Activated CD4-positive, alpha-beta T cell treated with anti-CD3 and anti-CD28 coated beads for 36 hours (primary cell): ENCODE measurements at regions of chr10 and their contacts with region 1.

Region 1: GRCh38 chr10:121927841-121928527 is at the start of gene ATE1:
- DNase-seq: peak; percentile 89
- ATAC-seq: peak; percentile 94
- H3K4me3 Mint-ChIP-seq: peak within 1 kb of the TSS; percentile 88
- H3K27ac Mint-ChIP-seq: peak within 1 kb of the TSS; percentile 96
- H3K4me1 Mint-ChIP-seq: peaks cover 20% of the 10 kb centered on the region
- H3K27me3 Mint-ChIP-seq: no peaks in the 10 kb centered on the region
- total RNA-seq, gene ATE1: 23.2 to 23.9 TPM

Region 2: DNA sequence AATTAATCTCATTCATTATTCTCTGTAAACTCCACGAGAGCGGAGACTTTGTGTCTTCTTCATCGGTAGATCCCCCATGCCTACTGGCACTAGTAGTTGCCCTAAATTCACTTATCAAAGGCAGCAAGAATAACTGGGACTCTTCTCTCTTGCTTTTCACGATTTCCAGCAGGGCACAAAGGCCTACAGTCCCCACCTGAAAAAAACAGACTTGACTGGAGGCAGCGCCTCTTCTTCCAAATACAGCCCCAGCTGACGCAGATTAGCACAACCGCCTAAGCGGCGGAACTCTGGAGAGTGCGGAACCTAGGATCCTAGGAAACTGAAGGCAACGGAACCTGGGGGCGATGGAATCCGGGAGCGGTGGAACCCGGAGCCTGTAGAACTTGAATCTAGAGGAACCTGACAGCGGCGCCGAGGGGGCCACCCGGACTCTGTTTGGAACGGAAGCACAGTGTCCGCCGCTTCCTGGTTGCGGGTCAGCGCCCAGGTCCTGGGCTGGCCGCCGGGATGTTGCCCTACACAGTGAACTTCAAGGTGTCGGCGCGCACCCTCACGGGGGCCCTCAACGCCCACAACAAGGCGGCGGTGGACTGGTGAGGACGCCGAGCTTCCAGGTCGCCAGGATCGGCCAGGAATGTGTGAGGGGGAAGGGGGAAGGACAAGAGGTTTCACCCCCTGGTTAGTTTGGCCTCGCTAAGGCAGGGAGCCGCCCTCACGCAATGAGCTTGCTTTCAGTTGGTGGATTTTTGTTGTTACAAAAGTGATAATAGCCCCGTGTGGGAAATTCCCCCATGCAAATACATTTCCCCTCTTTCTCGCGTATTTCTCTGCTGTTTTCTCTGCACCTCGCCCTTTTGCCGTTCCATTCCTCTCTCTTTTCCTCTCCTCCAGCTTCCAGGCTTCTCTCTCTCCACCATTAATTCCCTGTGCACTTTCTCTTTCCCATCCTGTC is 1076.8 kb before region 1 on chr10 and contains the start of gene WDR11:
- CTCF ChIA-PET with region 1: no interaction called
- POLR2A ChIA-PET with region 1: no interaction called
- intact Hi-C with region 1: loop called in 1 of 2 experiments (anchors 5 kb)
- DNase-seq: peak; percentile 83
- ATAC-seq: peak; percentile 93
- H3K4me3 Mint-ChIP-seq: peak within 1 kb of the TSS; percentile 88
- H3K27ac Mint-ChIP-seq: peak within 1 kb of the TSS; percentile 86
- H3K4me1 Mint-ChIP-seq: peaks cover 38% of the 10 kb centered on the region
- H3K27me3 Mint-ChIP-seq: no peaks in the 10 kb centered on the region
- total RNA-seq, gene WDR11: 39.6 to 65.1 TPM

Region 3: GRCh38 chr10:121497513-121498470 is 430.2 kb before region 1 on chr10:
- CTCF ChIA-PET with region 1: no interaction called
- POLR2A ChIA-PET with region 1: no interaction called
- intact Hi-C with region 1: no loop called
- DNase-seq: no peak
- ATAC-seq: no peak
- H3K4me3 Mint-ChIP-seq: no peak overlapping the region
- H3K27ac Mint-ChIP-seq: no peak overlapping the region
- H3K4me1 Mint-ChIP-seq: no peaks in the 10 kb centered on the region
- H3K27me3 Mint-ChIP-seq: peaks cover 1% of the 10 kb centered on the region

Region 4: DNA sequence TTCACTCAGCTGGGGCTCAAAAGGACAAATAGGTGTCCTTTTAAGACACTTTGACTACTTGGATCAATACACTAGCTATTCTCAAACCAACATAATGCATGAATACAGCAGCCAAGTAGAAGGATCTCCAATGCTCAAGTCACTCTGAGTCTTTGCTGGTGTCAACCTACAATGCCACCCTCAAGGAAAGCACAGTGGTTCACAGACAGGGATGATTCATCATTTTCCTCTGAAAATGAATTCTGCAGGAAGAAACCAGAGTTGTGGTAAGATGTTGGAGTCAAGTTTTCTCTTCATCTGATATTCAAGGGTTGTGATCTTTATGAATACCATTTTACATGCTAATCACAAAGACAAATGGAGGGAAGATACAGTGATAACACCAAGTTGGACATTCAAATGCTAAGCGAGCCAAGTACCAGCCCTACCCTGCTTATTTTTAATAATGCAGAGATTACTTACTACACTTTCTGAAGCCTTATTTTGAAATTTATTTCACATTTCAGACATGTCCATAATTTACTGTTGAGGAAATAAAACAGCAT is 186.7 kb before region 1 on chr10:
- CTCF ChIA-PET with region 1: no interaction called
- POLR2A ChIA-PET with region 1: no interaction called
- intact Hi-C with region 1: no loop called
- DNase-seq: no peak
- ATAC-seq: no peak
- H3K4me3 Mint-ChIP-seq: no peak overlapping the region
- H3K27ac Mint-ChIP-seq: no peak overlapping the region
- H3K4me1 Mint-ChIP-seq: peaks cover 16% of the 10 kb centered on the region
- H3K27me3 Mint-ChIP-seq: peaks cover 11% of the 10 kb centered on the region

Region 5: DNA sequence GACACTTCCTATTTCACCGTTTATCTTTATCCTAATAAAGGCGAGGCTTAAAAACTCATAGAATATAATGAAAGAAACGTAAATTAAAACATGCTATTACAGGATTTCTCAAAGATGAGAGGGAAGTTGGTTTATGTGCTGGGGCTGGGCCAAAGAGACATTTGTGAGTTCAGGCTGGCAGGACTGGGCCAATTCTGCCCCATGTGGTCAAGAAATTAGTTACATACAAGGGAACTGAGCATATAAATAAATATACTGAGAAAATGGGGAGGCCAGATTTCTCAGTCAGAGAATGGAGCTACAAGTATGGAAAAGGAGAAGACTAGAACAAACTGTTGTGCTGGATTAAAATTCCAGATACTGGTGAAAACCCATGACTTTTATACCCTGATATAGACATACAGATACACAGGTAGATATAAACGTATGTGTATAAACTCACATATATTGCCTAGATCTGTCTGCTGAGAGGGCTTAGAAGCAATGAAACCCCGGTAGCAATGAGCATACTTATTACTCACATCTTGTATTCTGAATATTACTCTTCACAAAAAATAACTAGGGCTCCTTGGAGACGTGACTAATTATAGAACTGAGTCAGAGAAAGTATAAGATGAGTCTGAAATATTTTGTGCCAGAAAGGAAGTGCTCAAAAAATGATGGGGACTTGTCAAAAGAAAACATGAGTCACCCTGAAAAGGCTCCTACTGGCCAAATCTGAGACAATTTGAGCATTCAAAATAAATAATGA is 174.1 kb before region 1 on chr10:
- CTCF ChIA-PET with region 1: no interaction called
- POLR2A ChIA-PET with region 1: no interaction called
- intact Hi-C with region 1: loop called in 1 of 2 experiments (anchors 5 kb)
- DNase-seq: no peak
- ATAC-seq: peak; percentile 97
- H3K4me3 Mint-ChIP-seq: peak overlapping the region; percentile 39
- H3K27ac Mint-ChIP-seq: peak overlapping the region; percentile 73
- H3K4me1 Mint-ChIP-seq: peaks cover 23% of the 10 kb centered on the region
- H3K27me3 Mint-ChIP-seq: no peaks in the 10 kb centered on the region

Region 6: DNA sequence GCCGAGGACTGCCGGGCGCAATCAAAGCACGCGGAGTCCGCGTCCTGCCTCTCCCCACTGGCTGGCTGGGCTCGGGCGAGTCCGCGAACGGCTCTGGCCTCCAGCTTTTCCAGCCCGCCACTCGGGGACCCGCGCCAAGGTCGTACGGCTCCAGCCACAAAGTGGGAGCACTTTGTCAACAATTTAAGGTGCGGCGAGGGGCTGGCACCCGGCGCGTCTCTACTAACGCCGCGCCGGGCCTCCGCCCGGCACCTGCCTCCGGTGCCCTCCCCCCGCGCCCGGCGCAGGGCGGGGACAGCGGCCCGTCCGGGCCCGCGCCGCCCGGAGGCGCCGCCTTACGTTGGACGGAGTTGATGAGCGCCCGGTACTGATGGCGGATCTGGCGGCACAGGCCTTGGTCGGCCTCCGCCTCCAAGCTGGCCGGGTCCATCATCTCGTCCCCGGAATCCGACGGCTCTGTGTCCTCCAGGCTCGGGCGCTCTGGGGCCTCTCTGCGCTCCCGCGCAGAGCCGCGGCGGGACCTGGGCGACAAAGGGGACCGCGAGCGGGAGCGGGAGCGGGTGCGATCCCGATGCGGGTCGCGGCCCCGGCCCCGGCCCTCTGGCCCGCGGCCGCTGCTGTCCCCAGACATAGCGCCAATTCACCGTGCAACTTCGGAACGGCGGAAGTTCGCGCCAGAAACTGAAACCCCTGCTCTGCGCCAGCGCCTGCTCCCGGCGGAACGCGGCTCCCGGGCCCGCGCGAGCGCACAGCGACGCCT is 46.7 kb after region 1 on chr10 and contains the start of gene NSMCE4A:
- CTCF ChIA-PET with region 1: no interaction called
- POLR2A ChIA-PET with region 1: no interaction called
- intact Hi-C with region 1: loop called (anchors 1 to 2 kb)
- DNase-seq: peak; percentile 85
- ATAC-seq: peak; percentile 87
- H3K4me3 Mint-ChIP-seq: peak within 1 kb of the TSS; percentile 81
- H3K27ac Mint-ChIP-seq: peak within 1 kb of the TSS; percentile 42
- H3K4me1 Mint-ChIP-seq: peaks cover 19% of the 10 kb centered on the region
- H3K27me3 Mint-ChIP-seq: no peaks in the 10 kb centered on the region
- total RNA-seq, gene NSMCE4A: 56.3 to 56.4 TPM

Region 7: DNA sequence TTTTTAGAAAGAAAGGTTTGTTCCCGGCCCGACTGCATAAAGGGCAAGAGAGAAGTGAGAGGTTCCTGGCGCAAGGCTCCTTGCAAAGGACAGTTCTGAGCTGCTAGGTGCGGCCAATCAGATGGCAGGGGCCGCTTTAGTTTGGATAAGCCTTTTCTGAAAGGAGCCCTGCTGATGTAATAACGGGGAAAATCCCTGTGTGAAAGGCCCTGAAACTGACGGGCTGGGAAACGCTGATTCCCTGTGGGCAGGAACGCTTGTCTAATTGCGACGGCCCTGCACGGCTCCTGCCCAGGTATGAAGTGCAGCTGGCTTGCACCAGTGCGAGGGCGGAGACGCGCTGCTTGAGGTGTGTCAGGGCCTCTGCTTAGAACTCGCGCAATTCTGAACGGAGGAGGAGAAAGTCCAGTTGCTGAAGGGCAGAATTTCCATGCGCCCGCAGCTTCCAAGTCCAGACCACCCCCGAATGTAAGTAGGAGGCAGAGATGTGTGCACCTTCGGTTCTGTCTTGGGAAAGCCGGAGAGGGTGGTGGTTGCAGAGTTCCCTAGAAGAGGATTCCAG is 91.5 kb after region 1 on chr10:
- CTCF ChIA-PET with region 1: no interaction called
- POLR2A ChIA-PET with region 1: no interaction called
- intact Hi-C with region 1: no loop called
- DNase-seq: no peak
- ATAC-seq: no peak
- H3K4me3 Mint-ChIP-seq: no peak overlapping the region
- H3K27ac Mint-ChIP-seq: no peak overlapping the region
- H3K4me1 Mint-ChIP-seq: no peaks in the 10 kb centered on the region
- H3K27me3 Mint-ChIP-seq: peaks cover 6% of the 10 kb centered on the region

Region 8: DNA sequence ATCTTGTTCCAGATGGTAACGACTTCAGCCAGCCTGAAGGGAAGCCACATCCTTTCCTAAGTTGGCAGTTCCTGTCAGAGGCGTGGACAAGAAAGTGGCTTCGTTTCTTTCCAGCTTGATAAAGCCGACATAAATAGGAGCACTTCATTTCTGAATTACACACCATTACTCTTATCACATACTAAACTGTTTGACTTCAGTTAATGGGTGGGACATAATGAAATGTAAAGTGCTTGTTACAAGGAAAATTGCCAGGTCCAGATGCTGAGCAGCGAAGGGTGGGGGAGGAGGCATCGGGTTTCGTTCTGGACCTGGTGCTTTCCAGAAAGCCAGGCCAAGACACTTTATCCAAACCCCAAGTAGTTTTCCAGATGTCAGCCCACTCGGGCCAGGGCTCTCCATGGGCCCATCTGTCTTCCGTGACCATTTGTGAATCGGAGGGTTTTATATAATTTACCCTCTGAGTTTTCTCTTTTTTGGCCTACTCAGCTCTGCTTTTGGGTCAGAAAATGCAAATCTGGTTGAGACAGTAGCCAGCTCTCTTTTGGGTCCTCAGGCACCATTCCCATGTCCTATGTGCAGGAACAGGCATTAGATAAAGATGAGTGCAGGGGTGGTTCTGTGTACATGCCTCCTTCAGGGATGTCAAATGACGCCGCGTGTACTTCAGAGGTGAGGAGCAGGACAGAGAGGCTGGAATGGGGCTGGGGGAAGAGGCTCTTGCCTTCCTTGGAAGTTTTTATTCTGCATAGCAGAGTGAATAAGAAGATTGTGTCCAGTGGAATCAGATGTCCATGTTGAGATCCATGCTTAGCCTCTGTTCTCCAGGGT is 151.2 kb after region 1 on chr10:
- CTCF ChIA-PET with region 1: no interaction called
- POLR2A ChIA-PET with region 1: no interaction called
- intact Hi-C with region 1: no loop called
- DNase-seq: no peak
- ATAC-seq: no peak
- H3K4me3 Mint-ChIP-seq: no peak overlapping the region
- H3K27ac Mint-ChIP-seq: no peak overlapping the region
- H3K4me1 Mint-ChIP-seq: no peaks in the 10 kb centered on the region
- H3K27me3 Mint-ChIP-seq: peaks cover 4% of the 10 kb centered on the region

Region 9: GRCh38 chr10:122879339-122880273 is 951.6 kb after region 1 on chr10 and contains the start of gene FAM24B:
- CTCF ChIA-PET with region 1: no interaction called
- POLR2A ChIA-PET with region 1: no interaction called
- intact Hi-C with region 1: loop called in 1 of 2 experiments (anchors 2 kb)
- DNase-seq: peak; percentile 96
- ATAC-seq: peak; percentile 90
- H3K4me3 Mint-ChIP-seq: peak within 1 kb of the TSS; percentile 92
- H3K27ac Mint-ChIP-seq: peak within 1 kb of the TSS; percentile 93
- H3K4me1 Mint-ChIP-seq: peaks cover 53% of the 10 kb centered on the region
- H3K27me3 Mint-ChIP-seq: no peaks in the 10 kb centered on the region
- total RNA-seq, gene FAM24B: 7.0 to 9.5 TPM

Region 10: GRCh38 chr10:122953827-122954730 is 1026.1 kb after region 1 on chr10 and contains the start of gene C10orf88:
- CTCF ChIA-PET with region 1: no interaction called
- POLR2A ChIA-PET with region 1: no interaction called
- intact Hi-C with region 1: loop called in 1 of 2 experiments (anchors 2 kb)
- DNase-seq: peak; percentile 98
- ATAC-seq: peak; percentile 98
- H3K4me3 Mint-ChIP-seq: peak within 1 kb of the TSS; percentile 77
- H3K27ac Mint-ChIP-seq: peak within 1 kb of the TSS; percentile 74
- H3K4me1 Mint-ChIP-seq: peaks cover 22% of the 10 kb centered on the region
- H3K27me3 Mint-ChIP-seq: no peaks in the 10 kb centered on the region
- total RNA-seq, gene C10orf88: 8.6 to 9.0 TPM

Region 11: DNA sequence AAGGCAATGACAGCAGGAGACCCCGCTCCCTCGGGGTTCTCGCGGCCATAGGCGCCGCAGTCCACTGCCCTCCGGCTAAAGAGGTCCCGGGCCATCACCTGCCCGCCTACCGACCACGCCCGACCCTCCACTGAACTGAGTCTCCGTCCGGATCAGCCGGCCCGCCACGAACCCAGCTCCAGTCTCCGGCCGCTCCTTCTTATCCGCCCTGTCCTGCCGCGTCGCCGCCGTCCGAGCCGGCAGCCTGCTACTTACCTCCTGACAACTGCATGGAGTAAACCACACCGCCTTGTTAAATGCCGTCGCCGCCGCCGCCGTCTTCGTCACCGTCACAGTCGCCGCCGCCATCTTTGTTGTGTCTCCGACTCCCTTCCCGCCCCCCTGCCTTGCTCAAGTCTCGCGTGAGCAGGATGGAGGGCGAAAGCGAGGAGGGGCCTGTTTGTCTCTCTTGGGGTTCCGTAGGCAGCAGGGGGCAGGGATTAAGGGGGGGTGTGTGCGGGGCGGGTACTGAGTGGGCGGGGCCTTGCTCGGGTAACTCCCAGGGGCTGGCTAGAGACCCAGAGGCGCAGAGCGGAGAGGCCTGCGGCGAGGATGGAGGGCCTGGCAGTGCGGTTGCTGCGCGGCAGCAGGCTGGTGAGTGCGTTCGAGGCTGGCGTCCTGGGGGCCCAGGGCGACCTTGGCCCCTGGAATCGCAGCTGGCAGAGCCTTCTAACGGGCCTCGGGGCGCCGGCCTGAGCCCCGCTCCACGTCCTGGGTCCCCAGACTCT is 1080.6 kb after region 1 on chr10 and contains the starts of genes ACADSB and IKZF5:
- CTCF ChIA-PET with region 1: no interaction called
- POLR2A ChIA-PET with region 1: no interaction called
- intact Hi-C with region 1: loop called in 1 of 2 experiments (anchors 1 kb)
- DNase-seq: peak; percentile 98
- ATAC-seq: peak; percentile 87
- H3K4me3 Mint-ChIP-seq: peak within 1 kb of the TSS; percentile 95
- H3K27ac Mint-ChIP-seq: peak within 1 kb of the TSS; percentile 99
- H3K4me1 Mint-ChIP-seq: peaks cover 42% of the 10 kb centered on the region
- H3K27me3 Mint-ChIP-seq: no peaks in the 10 kb centered on the region
- total RNA-seq, gene ACADSB: 24.0 to 25.5 TPM
- total RNA-seq, gene IKZF5: 9.4 to 14.1 TPM